Mammary epithelial cell (primary cell): ENCODE measurements at regions of chr2 and their contacts with region 1.

Region 1: DNA sequence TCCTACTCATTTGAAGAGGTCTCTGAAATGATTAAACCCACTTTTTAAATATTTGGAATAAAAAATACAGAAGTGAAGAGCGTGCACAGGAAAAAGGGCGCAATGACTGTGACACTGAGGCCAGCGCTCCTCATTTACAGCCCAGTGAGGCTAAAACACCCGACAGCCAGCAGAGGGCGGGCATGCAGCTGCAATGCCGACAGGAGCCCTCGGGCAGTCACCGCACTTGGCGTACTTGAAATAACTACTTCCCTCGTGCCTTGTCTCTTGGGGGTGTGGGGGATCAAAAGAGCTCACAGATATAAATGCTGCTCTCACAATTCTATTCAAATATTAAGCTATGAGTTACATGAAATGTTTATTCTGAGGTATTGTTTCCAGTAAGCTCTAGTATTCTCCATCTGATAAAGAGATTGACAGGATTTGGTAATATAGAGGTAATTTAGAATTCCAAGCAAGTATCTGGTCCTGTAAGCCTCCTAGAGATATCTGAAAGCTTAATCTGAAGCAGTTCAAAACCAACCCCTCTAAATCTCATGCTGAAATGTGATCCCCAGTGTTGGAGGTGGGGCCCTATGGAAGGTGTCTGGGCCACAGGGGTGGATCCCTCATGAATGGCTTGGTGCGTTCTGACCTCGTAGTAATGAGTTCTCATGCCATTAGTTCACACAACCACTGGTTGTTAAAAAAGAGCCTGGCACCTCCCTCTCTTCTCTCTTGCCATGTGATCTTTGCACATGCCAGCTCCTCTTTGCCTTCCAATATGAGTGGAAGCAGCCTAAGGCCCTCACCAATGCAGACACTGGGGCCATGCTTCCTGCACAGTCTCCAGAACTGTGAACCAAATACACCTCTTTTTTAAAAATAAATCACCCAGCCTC is 93.6 kb downstream of the ZAP70 start:
- DNase-seq: peak; percentile 45
- H3K4me3 ChIP-seq: no peak overlapping the region
- H3K27ac ChIP-seq: no peak overlapping the region
- H3K4me1 ChIP-seq: peaks cover 4% of the 10 kb centered on the region
- H3K27me3 ChIP-seq: no peaks in the 10 kb centered on the region
- CTCF ChIP-seq: peak; percentile 87 to 96

Region 2: GRCh38 chr2:97988722-97989121 is 181.7 kb after region 1 on chr2:
- CTCF ChIA-PET with region 1: no interaction called
- dilution Hi-C with region 1: no loop called
- in situ Hi-C with region 1: no loop called
- intact Hi-C with region 1: no loop called
- DNase-seq: no peak
- H3K4me3 ChIP-seq: no peak overlapping the region
- H3K27ac ChIP-seq: no peak overlapping the region
- H3K4me1 ChIP-seq: peaks cover 17% of the 10 kb centered on the region
- H3K27me3 ChIP-seq: no peaks in the 10 kb centered on the region
- CTCF ChIP-seq: no peak

Region 3: GRCh38 chr2:98086491-98087446 is 279.8 kb after region 1 on chr2 and contains the start of gene VWA3B:
- CTCF ChIA-PET with region 1: no interaction called
- dilution Hi-C with region 1: no loop called
- in situ Hi-C with region 1: no loop called
- intact Hi-C with region 1: loop called (anchors 2 kb)
- DNase-seq: peak; percentile 78
- H3K4me3 ChIP-seq: peak within 1 kb of the TSS; percentile 60 to 87 (median 73)
- H3K27ac ChIP-seq: peak within 1 kb of the TSS; percentile 91
- H3K4me1 ChIP-seq: peaks cover 10% of the 10 kb centered on the region
- H3K27me3 ChIP-seq: no peaks in the 10 kb centered on the region
- CTCF ChIP-seq: no peak
- total RNA-seq, gene VWA3B: 0.66 TPM in 1 of 2 donors, not detected in the other

Region 4: DNA sequence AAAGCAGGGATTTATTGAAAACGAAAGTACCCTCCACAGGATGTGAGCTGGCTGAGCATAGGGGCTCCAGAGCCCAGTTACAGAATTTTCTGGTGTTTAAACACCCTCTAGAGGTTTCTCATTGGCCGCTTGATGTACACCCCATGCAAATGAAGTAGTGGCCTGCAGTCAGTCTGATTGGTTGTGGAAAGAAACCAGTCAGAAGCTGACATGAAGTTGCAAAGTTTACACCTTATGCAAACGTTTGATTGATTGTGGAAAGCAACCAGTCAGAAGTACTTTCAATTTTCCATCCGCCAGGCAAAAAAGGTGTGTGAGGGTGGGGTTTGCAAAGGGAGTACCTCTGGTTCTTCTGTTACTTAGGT is 342.3 kb after region 1 on chr2:
- CTCF ChIA-PET with region 1: interaction called, 3 read pairs
- dilution Hi-C with region 1: no loop called
- in situ Hi-C with region 1: no loop called
- intact Hi-C with region 1: loop called (anchors 1 kb)
- DNase-seq: peak; percentile 92
- H3K4me3 ChIP-seq: peak overlapping the region; percentile 22 to 40 (median 34)
- H3K27ac ChIP-seq: peak overlapping the region; percentile 50
- H3K4me1 ChIP-seq: peaks cover 10% of the 10 kb centered on the region
- H3K27me3 ChIP-seq: no peaks in the 10 kb centered on the region
- CTCF ChIP-seq: no peak

Region 5: DNA sequence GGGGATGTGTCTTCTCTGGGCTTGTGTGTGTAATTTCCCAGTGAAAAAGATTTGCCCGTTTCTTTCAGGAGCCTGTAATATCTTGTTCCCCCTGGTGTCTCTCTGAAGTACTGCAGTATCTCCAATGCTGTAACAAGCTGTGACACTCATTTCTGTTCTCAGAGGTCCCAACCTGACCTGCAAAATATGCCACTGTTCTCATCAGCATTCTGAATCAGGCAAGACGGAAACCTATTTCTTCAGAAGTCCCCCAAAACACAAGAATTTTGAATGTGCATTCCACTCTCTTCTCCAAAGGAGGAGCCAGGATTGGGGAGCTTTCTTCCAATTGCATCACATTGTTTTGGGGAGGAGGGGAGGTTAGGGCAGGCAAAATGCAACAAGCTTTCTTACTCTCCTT is 462.3 kb after region 1 on chr2:
- CTCF ChIA-PET with region 1: no interaction called
- dilution Hi-C with region 1: no loop called
- in situ Hi-C with region 1: no loop called
- intact Hi-C with region 1: loop called (anchors 1 kb)
- DNase-seq: peak; percentile 43
- H3K4me3 ChIP-seq: no peak overlapping the region
- H3K27ac ChIP-seq: no peak overlapping the region
- H3K4me1 ChIP-seq: no peaks in the 10 kb centered on the region
- H3K27me3 ChIP-seq: no peaks in the 10 kb centered on the region
- CTCF ChIP-seq: peak; percentile 78

Region 6: DNA sequence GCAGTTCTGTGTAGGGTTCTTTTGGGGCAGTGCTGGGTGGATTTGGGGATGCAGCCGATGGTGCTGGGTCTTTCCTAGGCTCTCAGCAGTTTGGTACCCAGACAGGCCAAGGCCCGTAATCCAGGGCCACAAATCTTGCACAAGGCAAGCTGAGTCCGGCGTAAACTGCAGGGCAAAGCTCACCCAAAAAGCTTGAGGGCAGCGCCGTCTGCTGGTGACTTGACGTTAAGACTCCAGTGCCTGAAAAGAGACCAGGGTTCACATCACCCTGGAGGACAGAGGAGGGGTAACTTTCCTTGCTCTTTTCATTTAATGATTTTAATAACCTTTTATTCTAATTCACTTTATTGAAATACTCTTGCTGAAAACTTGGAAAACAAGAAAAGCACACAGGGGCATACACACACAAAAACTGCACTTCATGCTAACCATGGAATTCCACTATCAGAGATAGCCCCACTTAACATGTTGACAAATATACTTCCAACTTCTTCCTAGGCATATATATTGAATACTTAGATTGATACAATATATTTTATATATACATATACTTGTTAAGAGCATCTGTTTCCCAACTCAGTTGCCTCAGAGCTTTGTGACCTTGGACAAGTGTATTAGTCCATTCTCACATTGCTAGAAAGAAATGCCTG is 578.2 kb after region 1 on chr2:
- CTCF ChIA-PET with region 1: no interaction called
- dilution Hi-C with region 1: no loop called
- in situ Hi-C with region 1: loop called (anchors 25 kb)
- intact Hi-C with region 1: loop called (anchors 1 kb)
- DNase-seq: peak; percentile 64
- H3K4me3 ChIP-seq: no peak overlapping the region
- H3K27ac ChIP-seq: no peak overlapping the region
- H3K4me1 ChIP-seq: no peaks in the 10 kb centered on the region
- H3K27me3 ChIP-seq: peaks cover 9% of the 10 kb centered on the region
- CTCF ChIP-seq: peak; percentile 100